B cell (primary cell): ENCODE measurements at regions of chr1 and their contacts with region 1.

Region 1: GRCh38 chr1:112369392-112370285 is 26.4 kb upstream of the CTTNBP2NL start:
- DNase-seq: peak; percentile 84
- ATAC-seq: peak; percentile 100
- H3K4me3 ChIP-seq: no peak overlapping the region
- H3K4me3 Mint-ChIP-seq: no peak overlapping the region
- H3K27ac ChIP-seq: no peak overlapping the region
- H3K27ac Mint-ChIP-seq: no peak overlapping the region
- H3K4me1 ChIP-seq: peaks cover 4% of the 10 kb centered on the region in 2 donors
- H3K4me1 Mint-ChIP-seq: peaks cover 4% of the 10 kb centered on the region
- H3K27me3 ChIP-seq: peaks cover 0 to 34% (median 11%) of the 10 kb centered on the region in 4 experiments
- H3K27me3 Mint-ChIP-seq: peaks cover 50% of the 10 kb centered on the region
- CTCF ChIP-seq: peak; percentile 98

Region 2: DNA sequence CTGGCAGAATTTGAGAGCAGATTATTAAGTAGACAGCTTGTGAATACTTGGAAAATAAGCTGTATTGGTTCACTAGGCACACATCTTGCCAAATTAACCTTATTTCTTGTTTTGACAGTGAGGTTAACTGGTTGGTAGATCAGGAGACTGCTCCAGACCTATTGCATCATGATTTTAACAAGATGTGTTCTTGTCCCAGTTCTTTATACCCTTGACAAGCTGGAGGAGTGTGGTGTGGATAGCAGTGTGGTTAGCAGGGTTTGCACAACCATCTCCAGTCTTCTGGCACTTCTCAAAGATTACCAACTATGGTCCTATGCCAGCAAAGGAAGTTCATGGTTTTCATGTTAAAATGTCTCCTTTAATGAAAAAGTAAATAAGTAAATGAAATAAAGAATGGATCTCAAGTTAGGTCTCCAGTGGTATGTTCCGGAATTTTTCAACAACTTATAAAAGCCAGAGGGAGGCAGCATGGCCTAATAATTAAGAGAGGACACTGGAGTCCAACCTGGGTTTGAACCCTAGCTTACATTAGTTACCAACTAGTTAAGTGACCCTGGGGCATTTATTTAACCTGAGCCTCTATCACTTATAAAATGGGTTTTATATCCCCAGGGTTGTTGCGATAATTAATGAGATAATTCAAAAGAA is 579.8 kb before region 1 on chr1:
- CTCF ChIA-PET with region 1: interaction called, 6 read pairs
- POLR2A ChIA-PET with region 1: no interaction called
- intact Hi-C with region 1: loop called (anchors 1 kb)
- DNase-seq: no peak
- ATAC-seq: no peak
- H3K4me3 ChIP-seq: no peak overlapping the region
- H3K4me3 Mint-ChIP-seq: no peak overlapping the region
- H3K27ac ChIP-seq: no peak overlapping the region
- H3K27ac Mint-ChIP-seq: no peak overlapping the region
- H3K4me1 ChIP-seq: peaks cover 13 to 26% of the 10 kb centered on the region in 2 donors
- H3K4me1 Mint-ChIP-seq: peaks cover 23% of the 10 kb centered on the region
- H3K27me3 ChIP-seq: peaks cover 0 to 25% (median 12%) of the 10 kb centered on the region in 4 experiments
- H3K27me3 Mint-ChIP-seq: peaks cover 41% of the 10 kb centered on the region
- CTCF ChIP-seq: no peak

Region 3: DNA sequence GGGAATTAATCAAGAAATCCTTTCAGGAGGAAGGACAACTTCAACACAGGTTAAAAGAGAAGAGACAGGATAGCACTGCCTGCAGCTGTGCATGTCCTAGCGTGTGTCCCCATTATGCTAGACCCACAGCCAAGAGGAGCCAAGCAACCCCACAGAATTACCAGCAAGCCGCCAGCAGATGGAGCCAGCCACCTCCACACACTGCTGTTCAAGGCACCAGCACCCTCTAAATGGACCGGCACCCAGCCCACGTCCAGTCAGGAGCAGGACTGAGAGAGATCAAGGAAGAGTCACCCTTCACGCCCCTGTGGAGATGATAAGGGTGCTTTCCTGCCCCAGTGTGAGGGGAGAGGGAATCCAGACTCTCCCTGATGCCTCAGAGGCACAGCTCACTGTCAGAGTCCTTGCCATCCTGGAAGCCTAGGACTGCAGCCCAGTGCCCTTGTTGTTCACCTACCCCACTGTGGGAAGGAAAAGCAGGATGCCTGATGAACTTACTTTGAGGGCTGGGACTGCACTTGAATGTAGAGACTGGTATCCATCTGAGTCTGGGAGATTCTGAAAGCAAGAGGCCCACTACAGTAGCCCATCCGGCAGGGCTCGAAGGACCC is 10.7 kb before region 1 on chr1:
- CTCF ChIA-PET with region 1: interaction called, 29 read pairs
- POLR2A ChIA-PET with region 1: no interaction called
- intact Hi-C with region 1: loop called (anchors 1 kb)
- DNase-seq: peak; percentile 57
- ATAC-seq: peak; percentile 54
- H3K4me3 ChIP-seq: no peak overlapping the region
- H3K4me3 Mint-ChIP-seq: no peak overlapping the region
- H3K27ac ChIP-seq: no peak overlapping the region
- H3K27ac Mint-ChIP-seq: no peak overlapping the region
- H3K4me1 ChIP-seq: no peaks in the 10 kb centered on the region
- H3K4me1 Mint-ChIP-seq: no peaks in the 10 kb centered on the region
- H3K27me3 ChIP-seq: peaks cover 0 to 25% (median 16%) of the 10 kb centered on the region in 4 experiments
- H3K27me3 Mint-ChIP-seq: peaks cover 56% of the 10 kb centered on the region
- CTCF ChIP-seq: peak; percentile 78

Region 4: DNA sequence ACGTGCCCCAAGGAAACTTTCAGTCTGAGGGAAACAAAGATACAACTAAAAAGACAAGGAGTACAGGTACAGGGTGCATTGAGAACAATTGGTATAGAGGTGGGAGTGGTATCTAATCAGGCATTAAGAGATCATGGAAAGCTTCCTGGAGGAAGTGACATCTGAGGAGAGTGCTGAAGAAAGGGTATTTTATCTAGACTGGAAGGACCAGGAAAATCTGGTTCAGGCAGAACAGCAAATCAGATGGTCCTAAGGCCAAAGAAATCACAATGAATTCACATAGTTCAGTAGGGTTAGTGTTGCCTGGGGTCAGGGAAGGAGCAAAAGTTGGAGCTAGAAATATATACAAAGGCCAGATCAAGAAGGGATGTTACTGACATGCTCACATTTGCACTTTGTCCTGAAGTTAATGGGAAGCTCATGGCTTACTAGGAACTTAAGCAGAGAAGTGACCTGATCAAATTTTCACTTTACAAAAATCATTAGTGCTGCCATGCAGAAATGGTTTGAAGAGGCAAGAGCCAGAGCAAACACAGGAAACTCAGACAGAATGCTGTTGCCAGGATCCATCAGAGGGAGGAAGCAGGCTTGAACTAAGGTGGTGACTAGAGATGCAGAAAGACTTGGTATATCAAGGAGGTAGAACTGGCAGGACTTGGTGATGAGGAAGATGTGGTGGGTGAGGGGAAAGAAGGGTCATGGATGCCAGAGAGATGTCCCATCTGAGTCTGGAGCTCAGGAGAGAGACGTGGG is 11.9 kb after region 1 on chr1:
- CTCF ChIA-PET with region 1: interaction called, 14 read pairs
- POLR2A ChIA-PET with region 1: no interaction called
- intact Hi-C with region 1: no loop called
- DNase-seq: no peak
- ATAC-seq: no peak
- H3K4me3 ChIP-seq: no peak overlapping the region
- H3K4me3 Mint-ChIP-seq: no peak overlapping the region
- H3K27ac ChIP-seq: no peak overlapping the region
- H3K27ac Mint-ChIP-seq: no peak overlapping the region
- H3K4me1 ChIP-seq: no peaks in the 10 kb centered on the region
- H3K4me1 Mint-ChIP-seq: no peaks in the 10 kb centered on the region
- H3K27me3 ChIP-seq: peaks cover 0 to 16% (median 5%) of the 10 kb centered on the region in 4 experiments
- H3K27me3 Mint-ChIP-seq: peaks cover 54% of the 10 kb centered on the region
- CTCF ChIP-seq: no peak

Region 5: GRCh38 chr1:112706908-112707663 is 337.4 kb after region 1 on chr1 and contains the start of gene RHOC:
- CTCF ChIA-PET with region 1: interaction called, 10 read pairs
- POLR2A ChIA-PET with region 1: no interaction called
- intact Hi-C with region 1: no loop called
- DNase-seq: peak; percentile 81
- ATAC-seq: peak; percentile 85
- H3K4me3 ChIP-seq: peak within 1 kb of the TSS in 4 of 5 experiments; percentile 56 to 74 (median 66)
- H3K4me3 Mint-ChIP-seq: peak within 1 kb of the TSS; percentile 88
- H3K27ac ChIP-seq: peak within 1 kb of the TSS in 1 of 2 donors; percentile 49
- H3K27ac Mint-ChIP-seq: peak within 1 kb of the TSS; percentile 81
- H3K4me1 ChIP-seq: peaks cover 34 to 46% of the 10 kb centered on the region in 2 donors
- H3K4me1 Mint-ChIP-seq: peaks cover 50% of the 10 kb centered on the region
- H3K27me3 ChIP-seq: no peaks in the 10 kb centered on the region
- H3K27me3 Mint-ChIP-seq: no peaks in the 10 kb centered on the region
- CTCF ChIP-seq: peak; percentile 72
- total RNA-seq, gene RHOC: 18.5 and 21.0 TPM in 2 replicates